Naive thymus-derived CD4-positive, alpha-beta T cell (primary cell): ENCODE measurements at regions of chr19 and their contacts with region 1.

Region 1: GRCh38 chr19:6801485-6802086 is 29.1 kb downstream of the VAV1 start:
- DNase-seq: peak; percentile 58 to 90 (median 85)
- ATAC-seq: peak; percentile 78
- H3K4me3 ChIP-seq: peak overlapping the region; percentile 67
- H3K4me3 Mint-ChIP-seq: peak overlapping the region; percentile 87 to 99 (median 94)
- H3K27ac ChIP-seq: peak overlapping the region; percentile 85
- H3K27ac Mint-ChIP-seq: peak overlapping the region; percentile 93 to 99 (median 97)
- H3K4me1 ChIP-seq: peaks cover 28 to 35% of the 10 kb centered on the region in 2 donors
- H3K4me1 Mint-ChIP-seq: peaks cover 46 to 85% (median 68%) of the 10 kb centered on the region in 7 donors
- H3K27me3 ChIP-seq: no peaks in the 10 kb centered on the region
- H3K27me3 Mint-ChIP-seq: no peaks in the 10 kb centered on the region

Region 2: GRCh38 chr19:6753178-6754031 is 48.2 kb before region 1 on chr19:
- CTCF ChIA-PET with region 1: no interaction called
- POLR2A ChIA-PET with region 1: interaction called, 9 read pairs
- intact Hi-C with region 1: loop called in 1 of 2 experiments (anchors 1 kb)
- DNase-seq: peak; percentile 64 to 86 (median 75)
- ATAC-seq: peak; percentile 96
- H3K4me3 ChIP-seq: peak overlapping the region; percentile 64
- H3K4me3 Mint-ChIP-seq: peak overlapping the region; percentile 64 to 89 (median 74)
- H3K27ac ChIP-seq: peak overlapping the region; percentile 48
- H3K27ac Mint-ChIP-seq: peak overlapping the region; percentile 41 to 93 (median 88)
- H3K4me1 ChIP-seq: no peaks in the 10 kb centered on the region
- H3K4me1 Mint-ChIP-seq: peaks cover 5 to 14% (median 11%) of the 10 kb centered on the region in 7 donors
- H3K27me3 ChIP-seq: no peaks in the 10 kb centered on the region
- H3K27me3 Mint-ChIP-seq: no peaks in the 10 kb centered on the region

Region 3: GRCh38 chr19:6761053-6761676 is 40.4 kb before region 1 on chr19:
- CTCF ChIA-PET with region 1: no interaction called
- POLR2A ChIA-PET with region 1: interaction called, 27 read pairs
- intact Hi-C with region 1: no loop called
- DNase-seq: peak in 1 of 9 donors; percentile 31
- ATAC-seq: peak; percentile 37
- H3K4me3 ChIP-seq: no peak overlapping the region
- H3K4me3 Mint-ChIP-seq: no peak overlapping the region
- H3K27ac ChIP-seq: no peak overlapping the region
- H3K27ac Mint-ChIP-seq: peak overlapping the region in 1 of 9 donors; percentile 4
- H3K4me1 ChIP-seq: peaks cover 13 to 20% of the 10 kb centered on the region in 2 donors
- H3K4me1 Mint-ChIP-seq: peaks cover 3 to 32% (median 19%) of the 10 kb centered on the region in 7 donors
- H3K27me3 ChIP-seq: no peaks in the 10 kb centered on the region
- H3K27me3 Mint-ChIP-seq: no peaks in the 10 kb centered on the region

Region 4: DNA sequence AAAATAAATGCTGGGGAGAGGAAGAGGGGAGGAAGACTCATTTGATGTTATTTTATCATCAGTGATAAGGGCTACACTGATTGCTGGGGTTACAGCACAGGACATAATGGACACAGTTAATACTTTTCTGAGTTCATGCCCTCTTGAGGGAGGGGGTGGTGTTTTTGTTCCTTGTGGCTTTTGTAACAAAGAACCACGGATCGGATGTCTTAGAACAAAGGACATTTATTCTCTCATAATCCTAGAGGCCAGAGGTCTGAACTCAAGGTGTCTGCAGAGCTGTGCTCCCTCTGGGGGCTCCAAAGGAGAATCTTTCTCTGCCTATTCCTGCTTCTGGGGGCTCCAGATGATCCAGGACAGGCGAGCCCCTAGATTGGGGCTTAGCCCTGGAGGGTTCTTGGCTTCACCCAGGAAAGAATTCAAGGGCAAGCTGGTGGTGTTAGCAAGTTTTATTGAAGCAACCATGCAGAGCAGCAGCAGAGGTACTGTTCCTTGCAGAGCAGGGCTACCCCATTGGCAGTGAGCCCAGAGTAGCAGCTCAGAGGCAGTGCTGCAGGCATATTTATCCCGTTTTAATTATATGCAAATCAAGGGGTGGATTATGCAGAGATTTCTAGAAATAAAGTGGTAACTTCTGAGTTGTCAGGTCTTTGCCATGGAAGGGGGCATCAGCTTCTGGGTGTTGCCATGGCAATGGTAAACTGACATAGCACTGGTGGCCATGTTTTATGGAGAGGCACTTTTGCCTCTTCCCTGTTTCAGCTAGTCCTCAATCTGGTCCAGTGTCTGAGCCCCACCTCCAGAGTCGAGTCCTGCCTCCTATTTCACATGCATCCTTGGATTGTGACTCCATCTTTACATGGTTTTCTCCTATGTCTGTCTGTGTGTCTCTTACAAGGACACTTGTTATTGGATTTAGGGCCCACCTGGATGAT is 11.1 kb before region 1 on chr19:
- CTCF ChIA-PET with region 1: no interaction called
- POLR2A ChIA-PET with region 1: interaction called, 26 read pairs
- intact Hi-C with region 1: loop called in 1 of 2 experiments (anchors 1 kb)
- DNase-seq: peak in 1 of 9 donors; percentile 23
- ATAC-seq: no peak
- H3K4me3 ChIP-seq: no peak overlapping the region
- H3K4me3 Mint-ChIP-seq: peak overlapping the region in 9 of 10 donors; percentile 29 to 82 (median 62)
- H3K27ac ChIP-seq: peak overlapping the region; percentile 41
- H3K27ac Mint-ChIP-seq: peak overlapping the region; percentile 29 to 93 (median 81)
- H3K4me1 ChIP-seq: peaks cover 6 to 55% of the 10 kb centered on the region in 2 donors
- H3K4me1 Mint-ChIP-seq: peaks cover 50 to 89% (median 76%) of the 10 kb centered on the region in 7 donors
- H3K27me3 ChIP-seq: no peaks in the 10 kb centered on the region
- H3K27me3 Mint-ChIP-seq: no peaks in the 10 kb centered on the region

Region 5: DNA sequence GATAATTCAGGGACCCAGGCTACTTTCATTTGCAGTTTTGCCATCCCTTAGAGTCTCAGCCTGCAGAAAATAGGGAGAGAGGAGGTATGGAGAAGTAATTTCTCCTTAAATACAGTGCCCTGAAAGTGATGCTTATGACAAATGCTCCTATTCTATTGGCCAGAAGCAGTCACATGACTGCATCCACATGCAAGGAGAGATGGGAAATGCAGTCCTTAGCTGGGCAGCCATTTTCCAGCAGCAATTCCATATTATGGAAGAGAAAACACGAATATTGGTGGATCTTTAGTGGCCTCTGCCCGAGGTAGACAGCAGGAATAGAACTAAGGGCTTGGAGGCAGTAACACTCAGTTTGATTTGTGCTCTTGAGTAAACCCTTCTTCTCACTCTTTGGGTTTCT is 10.3 kb after region 1 on chr19:
- CTCF ChIA-PET with region 1: interaction called, 5 read pairs
- POLR2A ChIA-PET with region 1: interaction called, 24 read pairs
- intact Hi-C with region 1: loop called (anchors 1 kb)
- DNase-seq: no peak
- ATAC-seq: no peak
- H3K4me3 ChIP-seq: no peak overlapping the region
- H3K4me3 Mint-ChIP-seq: peak overlapping the region in 5 of 10 donors; percentile 37 to 68 (median 52)
- H3K27ac ChIP-seq: no peak overlapping the region
- H3K27ac Mint-ChIP-seq: peak overlapping the region; percentile 13 to 95 (median 81)
- H3K4me1 ChIP-seq: peaks cover 22 to 23% of the 10 kb centered on the region in 2 donors
- H3K4me1 Mint-ChIP-seq: peaks cover 42 to 84% (median 74%) of the 10 kb centered on the region in 7 donors
- H3K27me3 ChIP-seq: no peaks in the 10 kb centered on the region
- H3K27me3 Mint-ChIP-seq: no peaks in the 10 kb centered on the region

Region 6: GRCh38 chr19:6837525-6837924 is 35.9 kb after region 1 on chr19:
- CTCF ChIA-PET with region 1: interaction called, 3 read pairs
- POLR2A ChIA-PET with region 1: no interaction called
- intact Hi-C with region 1: loop called in 1 of 2 experiments (anchors 5 kb)
- DNase-seq: no peak
- ATAC-seq: no peak
- H3K4me3 ChIP-seq: no peak overlapping the region
- H3K4me3 Mint-ChIP-seq: peak overlapping the region in 1 of 10 donors; percentile 19
- H3K27ac ChIP-seq: peak overlapping the region; percentile 37
- H3K27ac Mint-ChIP-seq: peak overlapping the region; percentile 6 to 79 (median 43)
- H3K4me1 ChIP-seq: no peaks in the 10 kb centered on the region
- H3K4me1 Mint-ChIP-seq: peaks cover 12 to 26% (median 24%) of the 10 kb centered on the region in 7 donors
- H3K27me3 ChIP-seq: no peaks in the 10 kb centered on the region
- H3K27me3 Mint-ChIP-seq: no peaks in the 10 kb centered on the region